Endothelial cell of umbilical vein (primary cell): ENCODE measurements at regions of chr21 and their contacts with region 1.

Region 1: DNA sequence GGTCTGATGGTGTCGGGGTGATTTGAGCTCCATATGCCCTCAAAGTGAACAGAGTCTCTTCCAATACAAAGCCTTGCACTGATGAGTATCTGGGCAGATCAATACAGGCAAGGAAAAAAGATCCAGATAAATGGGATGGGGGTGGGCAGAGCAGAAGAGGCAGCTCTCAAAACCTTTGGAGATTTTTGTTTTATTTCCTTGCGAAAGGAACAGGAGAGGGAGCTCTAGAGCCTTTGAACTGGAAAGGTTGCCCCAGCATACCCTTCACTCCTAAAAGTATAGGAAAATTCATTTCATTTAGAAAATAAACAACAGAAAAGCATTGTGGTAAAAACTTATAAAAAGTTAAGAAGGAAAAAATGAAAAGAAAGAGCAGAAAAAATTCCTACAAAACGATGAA is 31.4 kb upstream of the OLIG2 start:
- DNase-seq: peak; percentile 27
- H3K4me3 ChIP-seq: no peak overlapping the region
- H3K27ac ChIP-seq: no peak overlapping the region
- H3K4me1 ChIP-seq: no peaks in the 10 kb centered on the region
- H3K27me3 ChIP-seq: peaks cover 17 to 37% of the 10 kb centered on the region in 2 experiments
- CTCF ChIP-seq: peak; percentile 38 to 44
- POLR2A ChIP-seq: no peak

Region 2: GRCh38 chr21:33121715-33122475 is 127.6 kb after region 1 on chr21:
- CTCF ChIA-PET with region 1: interaction called, 279 read pairs
- POLR2A ChIA-PET with region 1: no interaction called
- dilution Hi-C with region 1: no loop called
- intact Hi-C with region 1: loop called (anchors 1 kb)
- DNase-seq: peak; percentile 16
- H3K4me3 ChIP-seq: no peak overlapping the region
- H3K27ac ChIP-seq: no peak overlapping the region
- H3K4me1 ChIP-seq: no peaks in the 10 kb centered on the region
- H3K27me3 ChIP-seq: peaks cover 5 to 7% of the 10 kb centered on the region in 2 experiments
- CTCF ChIP-seq: no peak
- POLR2A ChIP-seq: no peak

Region 3: GRCh38 chr21:33288967-33289819 is 294.9 kb after region 1 on chr21:
- CTCF ChIA-PET with region 1: no interaction called
- POLR2A ChIA-PET with region 1: no interaction called
- dilution Hi-C with region 1: no loop called
- intact Hi-C with region 1: no loop called
- DNase-seq: no peak
- H3K4me3 ChIP-seq: no peak overlapping the region
- H3K27ac ChIP-seq: no peak overlapping the region
- H3K4me1 ChIP-seq: peaks cover 28% of the 10 kb centered on the region
- H3K27me3 ChIP-seq: no peaks in the 10 kb centered on the region
- CTCF ChIP-seq: no peak
- POLR2A ChIP-seq: no peak